HCT116 (cell line): ENCODE measurements at regions of chrX and their contacts with region 1.

Region 1: GRCh38 chrX:47129157-47129898 is 15.2 kb downstream of the NDUFB11 start:
- DNase-seq: peak; percentile 88
- ATAC-seq: peak; percentile 99
- H3K4me3 ChIP-seq: peak overlapping the region; percentile 59 to 65
- H3K27ac ChIP-seq: peak overlapping the region; percentile 47
- H3K4me1 ChIP-seq: 0 out of 4 replicates have a peak, but pooled peaks cover 0 to 2% of the 10 kb centered on the region in 2 experiments
- H3K27me3 ChIP-seq: no peaks in the 10 kb centered on the region
- CTCF ChIP-seq: no peak
- POLR2A ChIP-seq: no peak
- RAD21 ChIP-seq: no peak

Region 2: GRCh38 chrX:47112316-47112954 is 16.9 kb before region 1 on chrX:
- CTCF ChIA-PET with region 1: no interaction called
- POLR2A ChIA-PET with region 1: no interaction called
- RAD21 ChIA-PET with region 1: no interaction called
- intact Hi-C with region 1: no loop called
- DNase-seq: no peak
- ATAC-seq: peak; percentile 25; the same call in 1 of the 2 replicates
- H3K4me3 ChIP-seq: no peak overlapping the region
- H3K27ac ChIP-seq: no peak overlapping the region
- H3K4me1 ChIP-seq: no peaks in the 10 kb centered on the region
- H3K27me3 ChIP-seq: no peaks in the 10 kb centered on the region
- CTCF ChIP-seq: peak in 1 of 3 experiments; percentile 10; a peak in 1 of 6 replicates
- POLR2A ChIP-seq: no peak
- RAD21 ChIP-seq: peak; percentile 46

Region 3: DNA sequence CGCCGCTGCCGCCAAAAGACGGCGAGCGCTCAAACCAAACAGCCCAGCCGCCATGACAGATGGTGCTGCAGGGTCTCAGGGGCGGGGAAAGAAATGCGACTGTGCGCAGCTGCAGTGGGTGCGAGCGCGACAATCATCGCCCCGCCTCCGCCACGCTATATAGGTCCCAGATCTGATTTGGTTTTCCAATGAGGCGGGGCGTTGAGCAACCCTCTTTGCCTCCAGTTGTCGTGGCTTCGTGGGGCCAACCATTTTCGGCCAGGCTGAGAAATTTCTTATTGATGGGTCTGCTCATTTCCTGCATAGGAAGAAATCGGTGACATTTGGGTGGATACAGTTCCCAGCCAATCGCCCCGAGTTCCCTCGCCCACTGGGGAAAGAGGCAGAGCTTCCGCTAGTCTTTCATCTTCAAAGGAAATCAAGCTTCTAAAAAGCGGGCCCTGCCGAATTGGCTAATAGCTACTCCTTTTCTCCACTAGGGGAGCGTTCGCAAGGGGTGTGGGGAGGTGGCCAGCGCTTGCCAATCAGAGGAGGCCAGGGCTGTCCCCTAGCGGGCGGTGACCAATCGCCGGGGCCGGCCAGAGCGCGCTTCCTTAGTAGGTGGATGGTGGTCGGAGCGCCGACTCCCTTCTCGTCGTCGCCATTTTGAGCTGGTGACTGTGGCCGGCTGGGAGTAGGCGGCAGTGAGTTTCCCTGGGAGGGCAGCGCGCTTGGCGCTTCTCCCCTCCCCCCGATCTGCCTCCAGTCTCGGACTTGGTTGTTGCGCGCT is 15.5 kb after region 1 on chrX and contains the starts of genes NDUFB11 and RBM10:
- CTCF ChIA-PET with region 1: interaction called, 14 read pairs
- POLR2A ChIA-PET with region 1: interaction called, 12 read pairs
- RAD21 ChIA-PET with region 1: no interaction called
- intact Hi-C with region 1: no loop called
- DNase-seq: peak; percentile 87
- ATAC-seq: peak; percentile 95
- H3K4me3 ChIP-seq: peak within 1 kb of the TSS; percentile 65 to 77
- H3K27ac ChIP-seq: peak within 1 kb of the TSS; percentile 79
- H3K4me1 ChIP-seq: peaks cover 0 to 13% of the 10 kb centered on the region in 2 experiments; a peak in 2 of 4 replicates
- H3K27me3 ChIP-seq: no peaks in the 10 kb centered on the region
- CTCF ChIP-seq: peak in 2 of 3 experiments; percentile 51 to 54; a peak in 4 of 6 replicates
- POLR2A ChIP-seq: no peak
- RAD21 ChIP-seq: no peak
- total RNA-seq, gene NDUFB11: 78.9 TPM
- total RNA-seq, gene RBM10: 56.9 TPM

Region 4: GRCh38 chrX:48911412-48912182 is 1782.3 kb after region 1 on chrX and contains the start of gene SLC35A2:
- CTCF ChIA-PET with region 1: no interaction called
- POLR2A ChIA-PET with region 1: no interaction called
- RAD21 ChIA-PET with region 1: no interaction called
- intact Hi-C with region 1: no loop called
- DNase-seq: peak; percentile 77
- ATAC-seq: peak; percentile 90
- H3K4me3 ChIP-seq: peak within 1 kb of the TSS; percentile 84 to 87
- H3K27ac ChIP-seq: peak within 1 kb of the TSS; percentile 78
- H3K4me1 ChIP-seq: peaks cover 0 to 18% of the 10 kb centered on the region in 2 experiments
- H3K27me3 ChIP-seq: no peaks in the 10 kb centered on the region
- CTCF ChIP-seq: no peak
- POLR2A ChIP-seq: peak; percentile 40
- RAD21 ChIP-seq: no peak
- total RNA-seq, gene SLC35A2: 35.0 TPM